Lower lobe of right lung (tissue), 2 donors: ENCODE measurements at regions of chr6 and their contacts with region 1.

Region 1: GRCh38 chr6:71349976-71350615 is 61.5 kb downstream of the OGFRL1 start:
- DNase-seq: no peak
- ATAC-seq: peak in 1 of 2 donors; percentile 33
- H3K4me3 ChIP-seq: no peak overlapping the region
- H3K27ac ChIP-seq: peak overlapping the region; percentile 12
- H3K4me1 ChIP-seq: peaks cover 28% of the 10 kb centered on the region
- H3K27me3 ChIP-seq: no peaks in the 10 kb centered on the region
- CTCF ChIP-seq: no peak

Region 2: DNA sequence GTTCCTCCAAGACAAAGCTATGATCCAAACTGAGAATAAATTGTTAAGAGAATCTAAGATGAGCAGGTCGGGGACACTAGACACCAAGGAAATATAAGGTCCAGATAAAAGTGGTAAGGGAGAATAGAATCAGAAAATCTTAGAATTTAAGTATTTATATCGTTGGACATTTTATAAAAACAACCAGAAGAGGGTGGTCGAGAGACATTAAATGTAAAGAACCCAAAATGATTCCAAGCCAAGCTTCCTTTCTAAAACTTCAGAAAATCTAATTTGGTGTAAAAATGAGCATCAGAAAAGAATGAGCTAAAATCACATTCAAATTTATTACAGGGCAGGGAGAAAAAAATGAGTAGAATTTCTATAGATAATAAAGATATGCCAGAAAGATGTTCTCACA is 159.3 kb before region 1 on chr6:
- intact Hi-C with region 1: loop called (anchors 10 kb)
- DNase-seq: no peak
- ATAC-seq: no peak
- H3K4me3 ChIP-seq: no peak overlapping the region
- H3K27ac ChIP-seq: no peak overlapping the region
- H3K4me1 ChIP-seq: no peaks in the 10 kb centered on the region
- H3K27me3 ChIP-seq: no peaks in the 10 kb centered on the region
- CTCF ChIP-seq: peak; percentile 34

Region 3: DNA sequence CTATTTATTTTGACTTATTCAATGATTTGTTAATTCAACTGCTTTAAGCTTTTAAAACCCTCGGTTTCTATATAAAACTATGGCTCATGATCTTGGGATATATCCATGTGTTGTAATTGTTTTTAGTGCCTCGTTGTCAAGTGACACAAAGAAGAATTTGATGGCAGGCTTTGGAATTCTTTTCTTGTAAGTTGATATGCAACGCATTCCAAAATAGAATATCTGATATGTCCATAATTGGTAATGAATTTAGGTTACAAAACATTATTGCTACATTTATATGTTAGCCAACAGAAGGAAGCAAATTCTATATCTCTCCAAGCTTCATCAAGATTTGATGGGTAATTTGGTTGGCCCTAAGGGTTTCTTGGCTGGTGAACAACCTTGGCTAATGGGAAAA is 315.8 kb after region 1 on chr6:
- intact Hi-C with region 1: no loop called
- DNase-seq: no peak
- ATAC-seq: no peak
- H3K4me3 ChIP-seq: no peak overlapping the region
- H3K27ac ChIP-seq: no peak overlapping the region
- H3K4me1 ChIP-seq: no peaks in the 10 kb centered on the region
- H3K27me3 ChIP-seq: no peaks in the 10 kb centered on the region
- CTCF ChIP-seq: no peak